IMR-90 (cell line): ENCODE measurements at regions of chr6 and their contacts with region 1.

Region 1: GRCh38 chr6:87929843-87930288 is 117.8 kb upstream of the SPACA1 start:
- DNase-seq: peak; percentile 79
- ATAC-seq: peak; percentile 99
- H3K4me3 ChIP-seq: no peak overlapping the region
- H3K27ac ChIP-seq: no peak overlapping the region
- H3K4me1 ChIP-seq: no peaks in the 10 kb centered on the region
- H3K27me3 ChIP-seq: peaks cover 10% of the 10 kb centered on the region
- CTCF ChIP-seq: peak; percentile 79
- POLR2A ChIP-seq: no peak
- RAD21 ChIP-seq: peak; percentile 78

Region 2: GRCh38 chr6:88492824-88493223 is 563.0 kb after region 1 on chr6:
- CTCF ChIA-PET with region 1: no interaction called
- POLR2A ChIA-PET with region 1: no interaction called
- dilution Hi-C with region 1: no loop called
- in situ Hi-C with region 1: no loop called
- intact Hi-C with region 1: loop called (anchors 2 kb)
- DNase-seq: peak; percentile 28
- ATAC-seq: peak; percentile 44; the same call in 1 of the 2 replicates
- H3K4me3 ChIP-seq: no peak overlapping the region
- H3K27ac ChIP-seq: no peak overlapping the region
- H3K4me1 ChIP-seq: no peaks in the 10 kb centered on the region
- H3K27me3 ChIP-seq: no peaks in the 10 kb centered on the region
- CTCF ChIP-seq: peak; percentile 36
- POLR2A ChIP-seq: no peak
- RAD21 ChIP-seq: peak; percentile 32; the same call in 1 of the 2 replicates